ENCODE measurements at regions of chr12 and their contacts with region 1.

Region 1: DNA sequence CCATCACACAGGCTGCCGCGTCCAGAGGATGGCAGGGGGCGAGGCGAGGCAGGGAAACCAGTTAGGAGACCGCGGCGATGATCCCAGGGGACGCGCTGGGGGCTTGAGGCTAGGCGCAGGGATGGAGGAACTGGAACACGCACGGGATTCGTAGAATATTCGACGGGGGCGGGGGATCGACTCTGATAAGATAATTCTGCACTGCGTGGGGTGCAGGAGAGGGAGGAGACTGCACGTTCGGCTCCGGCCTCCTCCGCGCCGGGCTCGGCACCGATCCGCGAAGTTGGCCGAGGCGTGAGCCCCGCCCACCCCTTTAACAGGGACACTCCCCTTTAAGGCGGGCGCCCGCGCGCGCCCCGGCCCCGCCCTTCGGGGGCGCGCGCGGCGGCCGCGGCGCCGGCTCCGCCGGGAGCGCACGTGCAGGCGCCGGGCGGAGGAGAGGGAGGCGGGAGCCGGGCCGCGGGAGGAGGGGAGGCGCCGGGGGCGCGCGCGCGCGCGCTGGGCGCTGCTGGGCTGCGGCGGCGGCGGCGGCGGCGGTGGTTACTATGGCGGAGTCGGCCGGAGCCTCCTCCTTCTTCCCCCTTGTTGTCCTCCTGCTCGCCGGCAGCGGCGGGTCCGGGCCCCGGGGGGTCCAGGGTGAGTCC is at the start of gene ACVR1B:
- DNase-seq: peak; percentile 84 to 96 (median 90)
- ATAC-seq: peak; percentile 96
- H3K4me3 ChIP-seq: peak within 1 kb of the TSS; percentile 75
- H3K4me3 Mint-ChIP-seq: peak within 1 kb of the TSS; percentile 97
- H3K27ac ChIP-seq: peak within 1 kb of the TSS in 1 of 2 donors; percentile 54
- H3K27ac Mint-ChIP-seq: peak within 1 kb of the TSS; percentile 91
- H3K4me1 ChIP-seq: peaks cover 24% of the 10 kb centered on the region
- H3K4me1 Mint-ChIP-seq: peaks cover 51% of the 10 kb centered on the region
- H3K27me3 ChIP-seq: peaks cover 0 to 2% of the 10 kb centered on the region in 2 experiments
- H3K27me3 Mint-ChIP-seq: no peaks in the 10 kb centered on the region
- CTCF ChIP-seq: no peak
- total RNA-seq, gene ACVR1B: 14.2 to 14.5 TPM

Region 2: GRCh38 chr12:50979369-50980052 is 971.8 kb before region 1 on chr12:
- CTCF ChIA-PET with region 1: no interaction called
- POLR2A ChIA-PET with region 1: no interaction called
- intact Hi-C with region 1: no loop called
- DNase-seq: peak in 2 of 14 experiments; percentile 19 to 21
- ATAC-seq: no peak
- H3K4me3 ChIP-seq: no peak overlapping the region
- H3K4me3 Mint-ChIP-seq: no peak overlapping the region
- H3K27ac ChIP-seq: no peak overlapping the region
- H3K27ac Mint-ChIP-seq: peak overlapping the region; percentile 48
- H3K4me1 ChIP-seq: peaks cover 3% of the 10 kb centered on the region
- H3K4me1 Mint-ChIP-seq: peaks cover 6% of the 10 kb centered on the region
- H3K27me3 ChIP-seq: no peaks in the 10 kb centered on the region
- H3K27me3 Mint-ChIP-seq: no peaks in the 10 kb centered on the region
- CTCF ChIP-seq: no peak

Region 3: DNA sequence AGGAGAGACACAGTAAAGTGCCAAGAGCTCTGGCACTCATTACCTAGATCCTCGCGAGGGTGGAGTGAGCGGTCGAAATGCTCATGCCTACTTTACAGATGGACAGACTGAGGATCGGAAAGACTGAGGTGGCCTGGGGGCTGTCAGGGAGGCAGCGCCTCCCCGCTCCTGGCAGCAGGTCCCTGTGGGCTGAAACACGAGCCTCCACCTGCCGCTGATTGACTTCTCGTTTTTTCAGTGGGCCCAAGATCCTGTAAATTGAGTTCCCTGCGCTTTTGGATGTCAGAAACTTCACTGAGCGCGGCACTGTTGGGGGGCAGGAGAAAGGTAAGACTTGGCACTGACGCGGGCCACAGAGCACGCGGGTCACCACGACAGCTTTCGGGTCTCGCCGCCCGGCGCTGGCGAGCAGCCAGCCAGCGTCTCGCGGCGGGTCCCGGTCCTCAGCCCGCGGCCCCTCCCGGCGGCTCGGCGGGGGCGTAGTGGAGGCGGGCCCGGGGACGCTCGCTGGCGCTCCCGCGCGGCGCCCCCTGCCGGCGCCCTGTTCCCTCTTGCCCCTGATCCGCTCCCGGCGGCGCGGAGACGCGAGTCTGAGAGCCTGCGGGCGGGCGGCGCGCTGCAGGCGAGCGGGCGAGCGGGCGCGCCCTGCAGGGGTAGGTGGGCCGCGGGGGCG is 360.8 kb before region 1 on chr12:
- CTCF ChIA-PET with region 1: no interaction called
- POLR2A ChIA-PET with region 1: no interaction called
- intact Hi-C with region 1: loop called in 1 of 2 experiments (anchors 5 kb)
- DNase-seq: peak; percentile 44 to 88 (median 64)
- ATAC-seq: peak; percentile 88
- H3K4me3 ChIP-seq: peak overlapping the region; percentile 51
- H3K4me3 Mint-ChIP-seq: peak overlapping the region; percentile 86
- H3K27ac ChIP-seq: no peak overlapping the region
- H3K27ac Mint-ChIP-seq: no peak overlapping the region
- H3K4me1 ChIP-seq: peaks cover 16% of the 10 kb centered on the region
- H3K4me1 Mint-ChIP-seq: peaks cover 23% of the 10 kb centered on the region
- H3K27me3 ChIP-seq: peaks cover 31 to 40% of the 10 kb centered on the region in 2 experiments
- H3K27me3 Mint-ChIP-seq: peaks cover 68% of the 10 kb centered on the region
- CTCF ChIP-seq: no peak

Region 4: GRCh38 chr12:51814311-51815088 is 136.8 kb before region 1 on chr12:
- CTCF ChIA-PET with region 1: no interaction called
- POLR2A ChIA-PET with region 1: no interaction called
- intact Hi-C with region 1: loop called in 1 of 2 experiments (anchors 2 kb)
- DNase-seq: peak; percentile 36 to 87 (median 63)
- ATAC-seq: peak; percentile 89
- H3K4me3 ChIP-seq: peak overlapping the region; percentile 52
- H3K4me3 Mint-ChIP-seq: peak overlapping the region; percentile 87
- H3K27ac ChIP-seq: no peak overlapping the region
- H3K27ac Mint-ChIP-seq: peak overlapping the region; percentile 45
- H3K4me1 ChIP-seq: peaks cover 17% of the 10 kb centered on the region
- H3K4me1 Mint-ChIP-seq: peaks cover 10% of the 10 kb centered on the region
- H3K27me3 ChIP-seq: peaks cover 0 to 4% of the 10 kb centered on the region in 2 experiments
- H3K27me3 Mint-ChIP-seq: no peaks in the 10 kb centered on the region
- CTCF ChIP-seq: peak; percentile 38

Region 5: GRCh38 chr12:51905471-51906429 is 45.6 kb before region 1 on chr12:
- CTCF ChIA-PET with region 1: no interaction called
- POLR2A ChIA-PET with region 1: no interaction called
- intact Hi-C with region 1: no loop called
- DNase-seq: no peak
- ATAC-seq: no peak
- H3K4me3 ChIP-seq: no peak overlapping the region
- H3K4me3 Mint-ChIP-seq: no peak overlapping the region
- H3K27ac ChIP-seq: no peak overlapping the region
- H3K27ac Mint-ChIP-seq: no peak overlapping the region
- H3K4me1 ChIP-seq: no peaks in the 10 kb centered on the region
- H3K4me1 Mint-ChIP-seq: no peaks in the 10 kb centered on the region
- H3K27me3 ChIP-seq: peaks cover 16 to 34% of the 10 kb centered on the region in 2 experiments
- H3K27me3 Mint-ChIP-seq: peaks cover 33% of the 10 kb centered on the region
- CTCF ChIP-seq: no peak

Region 6: GRCh38 chr12:51980051-51980808 is 28.9 kb after region 1 on chr12:
- CTCF ChIA-PET with region 1: no interaction called
- POLR2A ChIA-PET with region 1: interaction called, 5 read pairs
- intact Hi-C with region 1: loop called in 1 of 2 experiments (anchors 2 kb)
- DNase-seq: peak; percentile 41 to 88 (median 58)
- ATAC-seq: peak; percentile 100
- H3K4me3 ChIP-seq: no peak overlapping the region
- H3K4me3 Mint-ChIP-seq: no peak overlapping the region
- H3K27ac ChIP-seq: no peak overlapping the region
- H3K27ac Mint-ChIP-seq: no peak overlapping the region
- H3K4me1 ChIP-seq: peaks cover 19% of the 10 kb centered on the region
- H3K4me1 Mint-ChIP-seq: peaks cover 32% of the 10 kb centered on the region
- H3K27me3 ChIP-seq: no peaks in the 10 kb centered on the region
- H3K27me3 Mint-ChIP-seq: no peaks in the 10 kb centered on the region
- CTCF ChIP-seq: peak; percentile 94

Region 7: GRCh38 chr12:52004042-52004648 is 52.8 kb after region 1 on chr12:
- CTCF ChIA-PET with region 1: no interaction called
- POLR2A ChIA-PET with region 1: interaction called, 4 read pairs
- intact Hi-C with region 1: loop called in 1 of 2 experiments (anchors 1 kb)
- DNase-seq: peak in 3 of 14 experiments; percentile 47 to 49 (median 48)
- ATAC-seq: no peak
- H3K4me3 ChIP-seq: no peak overlapping the region
- H3K4me3 Mint-ChIP-seq: no peak overlapping the region
- H3K27ac ChIP-seq: no peak overlapping the region
- H3K27ac Mint-ChIP-seq: peak overlapping the region; percentile 20
- H3K4me1 ChIP-seq: peaks cover 30% of the 10 kb centered on the region
- H3K4me1 Mint-ChIP-seq: peaks cover 21% of the 10 kb centered on the region
- H3K27me3 ChIP-seq: no peaks in the 10 kb centered on the region
- H3K27me3 Mint-ChIP-seq: no peaks in the 10 kb centered on the region
- CTCF ChIP-seq: peak; percentile 59

Region 8: GRCh38 chr12:52561880-52562449 is 610.6 kb after region 1 on chr12:
- CTCF ChIA-PET with region 1: no interaction called
- POLR2A ChIA-PET with region 1: no interaction called
- intact Hi-C with region 1: no loop called
- DNase-seq: no peak
- ATAC-seq: no peak
- H3K4me3 ChIP-seq: no peak overlapping the region
- H3K4me3 Mint-ChIP-seq: no peak overlapping the region
- H3K27ac ChIP-seq: no peak overlapping the region
- H3K27ac Mint-ChIP-seq: no peak overlapping the region
- H3K4me1 ChIP-seq: peaks cover 3% of the 10 kb centered on the region
- H3K4me1 Mint-ChIP-seq: no peaks in the 10 kb centered on the region
- H3K27me3 ChIP-seq: peaks cover 2 to 16% of the 10 kb centered on the region in 2 experiments
- H3K27me3 Mint-ChIP-seq: peaks cover 31% of the 10 kb centered on the region
- CTCF ChIP-seq: no peak